ENCODE measurements at regions of chr3 and their contacts with region 1.

Region 1: DNA sequence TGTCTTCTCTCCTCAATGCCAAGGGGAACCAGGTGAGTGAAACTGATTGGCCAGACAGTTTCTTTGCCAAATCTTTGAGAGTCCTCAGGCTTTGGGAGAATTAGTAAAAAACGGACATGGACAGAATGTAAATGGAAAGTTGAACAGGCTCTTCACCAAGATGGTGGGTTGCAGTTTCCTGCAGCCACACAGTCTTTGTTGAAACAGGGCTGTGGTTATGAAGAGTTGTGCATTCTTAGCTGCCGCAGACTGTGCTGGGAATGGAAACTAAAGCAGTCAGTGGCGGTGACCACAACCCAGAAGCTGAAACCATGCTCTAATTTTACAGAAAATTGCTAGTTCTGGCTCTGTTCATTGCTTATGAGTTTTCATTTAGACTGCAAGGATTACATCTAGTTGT is 42.1 kb upstream of the TASOR start:
- DNase-seq: peak in 7 of 9 donors; percentile 27 to 61 (median 44)
- ATAC-seq: peak; percentile 88
- H3K4me3 ChIP-seq: no peak overlapping the region
- H3K4me3 Mint-ChIP-seq: peak overlapping the region; percentile 55 to 87 (median 72)
- H3K27ac ChIP-seq: peak overlapping the region; percentile 51
- H3K27ac Mint-ChIP-seq: peak overlapping the region; percentile 63 to 98 (median 90)
- H3K4me1 ChIP-seq: peaks cover 20 to 31% of the 10 kb centered on the region in 2 donors
- H3K4me1 Mint-ChIP-seq: peaks cover 12 to 70% (median 51%) of the 10 kb centered on the region in 7 donors
- H3K27me3 ChIP-seq: no peaks in the 10 kb centered on the region
- H3K27me3 Mint-ChIP-seq: no peaks in the 10 kb centered on the region

Region 2: GRCh38 chr3:56693750-56694149 is 31.4 kb before region 1 on chr3:
- CTCF ChIA-PET with region 1: no interaction called
- POLR2A ChIA-PET with region 1: no interaction called
- intact Hi-C with region 1: no loop called
- DNase-seq: no peak
- ATAC-seq: peak; percentile 60
- H3K4me3 ChIP-seq: no peak overlapping the region
- H3K4me3 Mint-ChIP-seq: peak overlapping the region; percentile 57 to 90 (median 80)
- H3K27ac ChIP-seq: peak overlapping the region; percentile 26
- H3K27ac Mint-ChIP-seq: peak overlapping the region; percentile 37 to 84 (median 68)
- H3K4me1 ChIP-seq: peaks cover 32 to 36% of the 10 kb centered on the region in 2 donors
- H3K4me1 Mint-ChIP-seq: peaks cover 33 to 49% (median 44%) of the 10 kb centered on the region in 7 donors
- H3K27me3 ChIP-seq: no peaks in the 10 kb centered on the region
- H3K27me3 Mint-ChIP-seq: no peaks in the 10 kb centered on the region

Region 3: GRCh38 chr3:56711344-56711743 is 13.8 kb before region 1 on chr3:
- CTCF ChIA-PET with region 1: interaction called, 3 read pairs
- POLR2A ChIA-PET with region 1: interaction called, 3 read pairs
- intact Hi-C with region 1: loop called in 1 of 2 experiments (anchors 1 kb)
- DNase-seq: no peak
- ATAC-seq: no peak
- H3K4me3 ChIP-seq: no peak overlapping the region
- H3K4me3 Mint-ChIP-seq: no peak overlapping the region
- H3K27ac ChIP-seq: no peak overlapping the region
- H3K27ac Mint-ChIP-seq: peak overlapping the region in 4 of 9 donors; percentile 22 to 69 (median 40)
- H3K4me1 ChIP-seq: no peaks in the 10 kb centered on the region
- H3K4me1 Mint-ChIP-seq: peaks cover 0 to 9% (median 0%) of the 10 kb centered on the region in 7 donors
- H3K27me3 ChIP-seq: no peaks in the 10 kb centered on the region
- H3K27me3 Mint-ChIP-seq: no peaks in the 10 kb centered on the region

Region 4: DNA sequence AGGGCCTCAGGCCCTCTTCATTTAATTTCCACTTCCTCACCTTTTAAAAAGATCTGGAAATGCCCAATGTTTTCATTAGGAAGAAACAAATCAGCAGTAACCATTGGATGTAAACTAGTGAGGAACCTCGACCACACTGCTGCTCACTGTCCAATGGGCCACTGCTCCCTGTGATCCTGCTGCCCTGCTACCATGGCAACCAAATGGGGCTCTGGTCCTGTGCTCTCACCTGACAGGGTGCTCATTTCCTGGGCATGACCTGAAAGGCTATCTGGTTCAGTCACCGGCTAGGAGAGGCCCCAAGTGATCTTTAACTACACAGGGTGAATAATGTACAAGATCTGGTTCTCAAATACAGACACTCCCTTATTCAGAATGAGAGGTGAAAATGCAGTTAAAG is 22.0 kb after region 1 on chr3:
- CTCF ChIA-PET with region 1: interaction called, 4 read pairs
- POLR2A ChIA-PET with region 1: interaction called, 4 read pairs
- intact Hi-C with region 1: loop called (anchors 2 kb)
- DNase-seq: no peak
- ATAC-seq: no peak
- H3K4me3 ChIP-seq: no peak overlapping the region
- H3K4me3 Mint-ChIP-seq: no peak overlapping the region
- H3K27ac ChIP-seq: no peak overlapping the region
- H3K27ac Mint-ChIP-seq: peak overlapping the region in 6 of 9 donors; percentile 33 to 87 (median 67)
- H3K4me1 ChIP-seq: peaks cover under 1 to 5% of the 10 kb centered on the region in 2 donors
- H3K4me1 Mint-ChIP-seq: peaks cover 21 to 53% (median 26%) of the 10 kb centered on the region in 7 donors
- H3K27me3 ChIP-seq: no peaks in the 10 kb centered on the region
- H3K27me3 Mint-ChIP-seq: no peaks in the 10 kb centered on the region

Region 5: DNA sequence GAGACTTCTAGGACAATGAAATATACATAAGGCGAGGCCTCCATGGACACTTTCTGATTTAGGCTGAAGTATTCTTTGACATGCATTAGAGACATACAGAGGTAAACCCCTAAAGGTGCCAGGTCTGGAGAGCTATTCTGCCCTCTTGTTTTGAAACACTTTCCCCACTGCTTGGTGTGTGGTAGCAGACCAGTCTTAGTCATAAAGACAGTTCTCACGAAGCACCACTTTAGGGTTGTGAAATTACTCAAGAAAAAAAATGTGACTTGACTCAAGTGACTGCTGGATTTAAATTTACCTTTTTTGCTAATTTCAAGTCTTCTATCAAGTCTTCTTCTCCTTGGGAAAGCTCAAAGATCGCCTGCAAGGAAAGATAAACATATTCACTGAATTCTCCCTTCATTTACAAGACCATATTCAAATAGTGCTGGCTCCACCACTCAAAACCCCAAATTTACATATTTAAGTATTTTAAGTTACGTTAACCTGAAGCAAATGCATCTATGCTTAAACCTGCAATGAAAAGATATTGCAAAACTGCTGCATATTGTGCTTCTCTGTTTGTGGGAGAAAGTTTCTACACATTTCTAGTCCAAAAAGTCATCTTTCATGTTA is 28.1 kb after region 1 on chr3:
- CTCF ChIA-PET with region 1: interaction called, 3 read pairs
- POLR2A ChIA-PET with region 1: interaction called, 8 read pairs
- intact Hi-C with region 1: loop called (anchors 1 to 5 kb)
- DNase-seq: peak in 1 of 9 donors; percentile 31
- ATAC-seq: peak; percentile 74
- H3K4me3 ChIP-seq: no peak overlapping the region
- H3K4me3 Mint-ChIP-seq: peak overlapping the region in 7 of 10 donors; percentile 2 to 97 (median 90)
- H3K27ac ChIP-seq: peak overlapping the region; percentile 28
- H3K27ac Mint-ChIP-seq: peak overlapping the region; percentile 59 to 100 (median 80)
- H3K4me1 ChIP-seq: peaks cover 39 to 40% of the 10 kb centered on the region in 2 donors
- H3K4me1 Mint-ChIP-seq: peaks cover 41 to 80% (median 67%) of the 10 kb centered on the region in 7 donors
- H3K27me3 ChIP-seq: no peaks in the 10 kb centered on the region
- H3K27me3 Mint-ChIP-seq: no peaks in the 10 kb centered on the region

Region 6: DNA sequence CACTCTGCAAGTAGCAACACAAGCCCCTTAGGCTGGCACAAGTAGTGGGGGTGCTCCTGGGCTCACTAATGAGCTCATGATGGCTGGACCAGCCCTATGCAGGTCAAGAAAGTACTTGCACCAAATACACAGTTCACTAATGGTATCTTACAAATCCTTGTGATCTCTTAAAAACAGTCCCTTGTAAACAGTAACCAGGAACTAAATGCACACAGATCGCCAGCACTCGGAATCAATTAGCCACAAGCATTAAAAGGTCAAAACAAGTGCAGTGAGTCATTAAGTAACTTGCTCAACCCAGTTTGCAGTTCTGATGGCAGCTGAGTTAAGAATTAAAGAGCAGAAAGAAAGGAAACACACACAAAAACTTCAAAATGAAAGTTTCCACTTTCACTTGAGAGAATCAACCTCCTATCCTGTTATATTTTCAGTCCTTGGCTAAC is 33.4 kb after region 1 on chr3:
- CTCF ChIA-PET with region 1: no interaction called
- POLR2A ChIA-PET with region 1: interaction called, 8 read pairs
- intact Hi-C with region 1: loop called (anchors 1 to 5 kb)
- DNase-seq: peak in 3 of 9 donors; percentile 7 to 37 (median 27)
- ATAC-seq: peak; percentile 75
- H3K4me3 ChIP-seq: no peak overlapping the region
- H3K4me3 Mint-ChIP-seq: peak overlapping the region; percentile 34 to 83 (median 67)
- H3K27ac ChIP-seq: peak overlapping the region; percentile 51
- H3K27ac Mint-ChIP-seq: peak overlapping the region; percentile 78 to 94 (median 89)
- H3K4me1 ChIP-seq: peaks cover 44 to 47% of the 10 kb centered on the region in 2 donors
- H3K4me1 Mint-ChIP-seq: peaks cover 62 to 94% (median 89%) of the 10 kb centered on the region in 7 donors
- H3K27me3 ChIP-seq: no peaks in the 10 kb centered on the region
- H3K27me3 Mint-ChIP-seq: no peaks in the 10 kb centered on the region

Region 7: GRCh38 chr3:56790016-56790821 is 65.0 kb after region 1 on chr3:
- CTCF ChIA-PET with region 1: no interaction called
- POLR2A ChIA-PET with region 1: interaction called, 4 read pairs
- intact Hi-C with region 1: loop called in 1 of 2 experiments (anchors 2 kb)
- DNase-seq: peak in 7 of 9 donors; percentile 25 to 56 (median 48)
- ATAC-seq: peak; percentile 75
- H3K4me3 ChIP-seq: peak overlapping the region; percentile 19
- H3K4me3 Mint-ChIP-seq: peak overlapping the region; percentile 53 to 82 (median 74)
- H3K27ac ChIP-seq: peak overlapping the region; percentile 57
- H3K27ac Mint-ChIP-seq: peak overlapping the region; percentile 76 to 98 (median 89)
- H3K4me1 ChIP-seq: peaks cover 72 to 77% of the 10 kb centered on the region in 2 donors
- H3K4me1 Mint-ChIP-seq: peaks cover 67 to 97% (median 89%) of the 10 kb centered on the region in 7 donors
- H3K27me3 ChIP-seq: no peaks in the 10 kb centered on the region
- H3K27me3 Mint-ChIP-seq: no peaks in the 10 kb centered on the region

Region 8: DNA sequence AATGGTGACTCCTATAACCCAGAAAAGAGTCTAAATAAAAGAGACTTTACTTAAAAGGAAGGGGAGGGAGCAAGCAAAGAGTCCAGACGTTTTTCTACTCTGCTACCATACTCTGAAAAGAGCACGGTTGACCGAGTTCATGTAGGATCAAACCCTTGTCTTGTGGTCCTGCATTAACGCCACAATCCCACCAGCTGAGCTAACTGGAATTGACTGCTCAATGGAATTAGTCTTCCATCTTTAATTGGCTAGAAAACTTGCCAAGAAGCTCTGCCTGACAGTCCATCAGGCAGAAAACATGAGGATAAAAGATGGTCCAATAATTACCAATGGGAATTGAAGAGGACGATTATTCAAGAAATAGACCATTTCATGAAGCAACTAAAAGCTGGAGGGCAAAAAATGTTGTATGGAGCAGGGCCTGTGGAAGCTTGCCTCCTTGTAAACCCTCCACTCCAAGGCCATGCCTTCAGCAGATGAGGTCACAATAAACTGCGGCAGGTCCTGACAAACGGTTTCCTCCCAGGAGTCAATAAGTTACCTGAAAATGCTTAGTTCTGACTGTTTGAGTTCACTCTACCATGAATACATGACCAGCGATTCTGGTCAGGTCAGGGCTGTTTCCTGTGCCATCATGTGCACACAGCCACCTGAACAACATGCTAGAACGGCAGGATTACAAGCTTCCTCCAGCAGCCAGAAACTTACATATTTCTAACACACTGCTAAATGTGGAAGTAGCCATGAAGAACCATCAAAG is 112.2 kb after region 1 on chr3:
- CTCF ChIA-PET with region 1: no interaction called
- POLR2A ChIA-PET with region 1: no interaction called
- intact Hi-C with region 1: no loop called
- DNase-seq: no peak
- ATAC-seq: no peak
- H3K4me3 ChIP-seq: no peak overlapping the region
- H3K4me3 Mint-ChIP-seq: no peak overlapping the region
- H3K27ac ChIP-seq: no peak overlapping the region
- H3K27ac Mint-ChIP-seq: peak overlapping the region in 2 of 9 donors; percentile 63 to 72
- H3K4me1 ChIP-seq: no peaks in the 10 kb centered on the region
- H3K4me1 Mint-ChIP-seq: peaks cover 12 to 44% (median 34%) of the 10 kb centered on the region in 7 donors
- H3K27me3 ChIP-seq: no peaks in the 10 kb centered on the region
- H3K27me3 Mint-ChIP-seq: no peaks in the 10 kb centered on the region

Measured in naive thymus-derived CD4-positive, alpha-beta T cell (primary cell).